ENCODE measurements at regions of chr1 and their contacts with region 1.

Region 1: GRCh38 chr1:56019471-56019870 is 559.9 kb downstream of the PLPP3 start:
- DNase-seq: no peak
- H3K4me3 ChIP-seq: no peak overlapping the region
- H3K27me3 ChIP-seq: no peaks in the 10 kb centered on the region
- CTCF ChIP-seq: no peak

Region 2: DNA sequence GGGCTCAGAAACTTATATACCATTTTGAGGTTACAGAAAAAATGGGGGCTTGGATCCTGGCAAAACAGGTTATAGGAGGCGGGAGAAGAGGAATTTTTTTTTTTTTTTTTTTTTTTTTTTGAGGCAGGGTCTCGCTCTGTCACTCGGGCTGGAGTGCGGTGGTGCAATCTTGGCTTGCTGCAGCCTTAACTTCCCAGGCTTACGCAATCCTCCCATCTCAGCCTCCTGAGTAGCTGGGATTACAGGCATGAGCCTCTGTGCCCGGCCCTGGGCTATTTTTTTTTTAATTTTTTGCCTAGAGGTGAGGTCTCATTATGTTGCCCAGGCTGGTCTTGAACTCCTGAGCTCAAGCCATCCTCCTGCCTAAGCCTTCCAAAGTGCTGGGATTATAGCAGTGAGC is 1353.1 kb before region 1 on chr1:
- CTCF ChIA-PET with region 1: no interaction called
- POLR2A ChIA-PET with region 1: interaction called, 25 read pairs
- DNase-seq: no peak
- H3K4me3 ChIP-seq: no peak overlapping the region
- H3K27me3 ChIP-seq: no peaks in the 10 kb centered on the region; the same call in 1 of the 2 replicates
- CTCF ChIP-seq: no peak

Region 3: DNA sequence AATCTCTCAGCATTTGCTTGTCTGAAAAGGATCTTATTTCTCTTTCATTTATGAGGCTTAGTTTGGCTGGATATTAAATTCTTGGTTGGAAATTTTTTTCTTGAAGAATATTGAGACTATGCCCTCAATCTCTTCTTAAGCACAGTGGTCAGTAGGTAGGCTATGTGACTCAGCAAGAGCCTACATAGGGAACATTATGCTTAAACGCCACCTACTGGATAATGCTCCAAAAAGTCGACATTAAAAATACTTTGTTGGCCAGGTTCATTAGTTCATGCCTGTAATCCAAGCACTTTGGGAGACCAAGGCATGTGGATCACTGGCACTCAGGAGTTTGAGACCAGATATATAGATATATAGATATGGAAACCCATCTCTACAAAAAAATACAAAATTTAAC is 126.3 kb before region 1 on chr1:
- CTCF ChIA-PET with region 1: no interaction called
- POLR2A ChIA-PET with region 1: no interaction called
- DNase-seq: no peak
- H3K4me3 ChIP-seq: no peak overlapping the region
- H3K27me3 ChIP-seq: no peaks in the 10 kb centered on the region
- CTCF ChIP-seq: peak; percentile 22; the same call in 1 of the 2 replicates

Measured in BJ (cell line).